ENCODE measurements at regions of chr10 and their contacts with region 1.

Region 1: GRCh38 chr10:47024399-47025252 is 113.4 kb downstream of the PTPN20 start:
- DNase-seq: peak; percentile 33 to 85
- H3K4me3 ChIP-seq: no peak overlapping the region
- H3K27ac ChIP-seq: no peak overlapping the region
- H3K4me1 ChIP-seq: no peaks in the 10 kb centered on the region
- H3K27me3 ChIP-seq: 0 out of 7 replicates have a peak, but pooled peaks cover 0 to 2% (median 0%) of the 10 kb centered on the region in 4 experiments
- CTCF ChIP-seq: peak; percentile 91 to 98 (median 96)
- EP300 ChIP-seq: no peak
- POLR2A ChIP-seq: no peak
- RAD21 ChIP-seq: peak; percentile 91 to 94

Region 2: GRCh38 chr10:46992803-46993561 is 31.6 kb before region 1 on chr10:
- CTCF ChIA-PET with region 1: interaction called, 36 read pairs
- POLR2A ChIA-PET with region 1: no interaction called
- DNase-seq: peak in 1 of 2 experiments; percentile 56
- H3K4me3 ChIP-seq: no peak overlapping the region
- H3K27ac ChIP-seq: no peak overlapping the region
- H3K4me1 ChIP-seq: peaks cover 0 to 6% (median 2%) of the 10 kb centered on the region in 4 experiments; a peak in 3 of 7 replicates
- H3K27me3 ChIP-seq: no peaks in the 10 kb centered on the region
- CTCF ChIP-seq: peak in 2 of 3 experiments; percentile 43 to 60; a peak in 2 of 4 replicates
- EP300 ChIP-seq: no peak
- POLR2A ChIP-seq: no peak
- RAD21 ChIP-seq: peak; percentile 42 to 52; a peak in 3 of 4 replicates

Region 3: DNA sequence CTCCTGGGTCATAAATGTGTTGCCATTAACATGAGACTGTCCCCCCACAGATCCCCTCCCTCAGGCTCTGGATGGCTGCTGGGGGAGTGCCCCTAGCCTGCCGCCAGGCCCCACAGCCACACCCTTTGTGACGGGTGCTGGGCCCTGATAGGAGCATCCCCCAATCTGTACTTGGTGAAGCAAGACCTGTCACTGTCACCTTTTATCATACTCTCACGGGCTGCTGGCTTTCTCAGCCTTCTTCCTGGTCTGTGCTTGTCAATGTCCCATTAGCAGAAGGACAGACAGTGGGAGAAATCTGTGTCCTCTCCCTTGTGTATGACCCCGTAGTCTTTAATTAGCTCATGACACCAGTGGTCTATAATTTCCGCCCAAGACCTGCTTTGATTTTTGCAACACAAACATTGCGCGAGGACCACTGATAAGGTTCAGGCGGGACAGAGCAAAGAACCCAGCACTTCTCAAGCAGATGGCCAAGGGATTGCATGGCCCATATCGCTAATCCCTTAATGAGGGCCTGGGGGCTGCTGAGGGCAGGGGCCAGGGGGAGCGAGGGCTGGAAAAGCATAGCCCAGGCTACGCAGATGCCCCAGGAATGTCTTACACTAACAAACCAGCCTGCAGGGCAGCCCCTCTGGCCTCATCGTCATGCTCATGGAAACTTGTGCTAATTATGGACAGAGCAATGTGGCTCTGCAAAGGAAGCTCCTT is 14.4 kb after region 1 on chr10:
- CTCF ChIA-PET with region 1: interaction called, 34 read pairs
- POLR2A ChIA-PET with region 1: no interaction called
- DNase-seq: no peak
- H3K4me3 ChIP-seq: no peak overlapping the region
- H3K27ac ChIP-seq: no peak overlapping the region
- H3K4me1 ChIP-seq: peaks cover 0 to 2% (median 0%) of the 10 kb centered on the region in 4 experiments; a peak in 1 of 7 replicates
- H3K27me3 ChIP-seq: no peaks in the 10 kb centered on the region
- CTCF ChIP-seq: no peak
- EP300 ChIP-seq: no peak
- POLR2A ChIP-seq: no peak
- RAD21 ChIP-seq: no peak

Region 4: GRCh38 chr10:47104786-47105385 is 80.3 kb after region 1 on chr10:
- CTCF ChIA-PET with region 1: no interaction called
- POLR2A ChIA-PET with region 1: no interaction called
- DNase-seq: peak in 1 of 2 experiments; percentile 6
- H3K4me3 ChIP-seq: no peak overlapping the region
- H3K27ac ChIP-seq: no peak overlapping the region
- H3K4me1 ChIP-seq: no peaks in the 10 kb centered on the region
- H3K27me3 ChIP-seq: no peaks in the 10 kb centered on the region
- CTCF ChIP-seq: no peak
- EP300 ChIP-seq: no peak
- POLR2A ChIP-seq: no peak
- RAD21 ChIP-seq: no peak

Region 5: GRCh38 chr10:47318706-47319105 is 294.1 kb after region 1 on chr10:
- CTCF ChIA-PET with region 1: interaction called, 180 read pairs
- POLR2A ChIA-PET with region 1: no interaction called
- DNase-seq: no peak
- H3K4me3 ChIP-seq: no peak overlapping the region
- H3K27ac ChIP-seq: no peak overlapping the region
- H3K4me1 ChIP-seq: no peaks in the 10 kb centered on the region
- H3K27me3 ChIP-seq: no peaks in the 10 kb centered on the region; a peak in 1 of 7 replicates
- CTCF ChIP-seq: no peak
- EP300 ChIP-seq: no peak
- POLR2A ChIP-seq: no peak
- RAD21 ChIP-seq: no peak

Measured in H1 (cell line).